Activated CD4-positive, alpha-beta T cell treated with anti-CD3 and anti-CD28 coated beads for 36 hours (primary cell): ENCODE measurements at regions of chr3 and their contacts with region 1.

Region 1: DNA sequence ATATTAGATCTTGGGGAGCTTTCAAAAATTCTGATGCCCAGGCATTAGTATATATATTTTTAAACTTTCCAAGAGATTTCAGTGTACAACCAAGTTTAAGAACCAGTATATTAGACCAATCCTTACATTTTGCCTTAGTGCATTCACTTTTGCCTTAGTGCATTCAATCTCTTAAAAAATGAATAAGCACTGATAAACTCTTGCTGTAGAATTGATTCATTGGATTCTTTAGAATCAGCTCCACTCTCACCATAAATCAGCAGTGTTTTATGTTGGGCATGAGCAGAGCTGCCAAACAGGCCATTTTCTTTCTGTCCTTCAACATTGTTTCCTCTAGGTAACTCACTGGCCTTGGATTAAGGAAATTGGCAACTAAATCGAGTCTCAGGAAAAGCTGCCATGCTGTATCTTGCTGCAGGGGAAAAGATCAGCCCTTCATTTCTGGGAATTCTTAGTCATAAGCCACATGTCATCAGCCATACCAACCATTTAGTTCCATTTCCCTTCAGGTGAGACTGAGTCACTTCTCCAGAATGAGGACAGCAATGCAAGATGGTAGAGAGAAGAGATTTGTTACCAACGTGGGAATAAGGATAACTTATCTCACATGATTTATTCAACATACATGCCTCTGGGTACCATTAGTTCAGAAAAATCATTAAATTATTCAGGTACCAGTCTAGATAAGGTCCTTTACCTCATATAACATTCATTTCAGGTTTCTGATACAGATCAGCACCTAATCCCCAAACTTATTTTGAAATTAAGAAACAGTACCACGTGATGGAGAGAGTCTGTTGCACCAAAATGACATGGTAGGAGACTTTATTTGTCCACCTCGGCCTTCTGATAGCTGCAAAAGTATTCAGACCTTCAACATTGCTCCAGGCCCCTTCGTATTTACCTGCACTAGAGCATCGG is 192.5 kb downstream of the P3H2 start:
- DNase-seq: no peak
- ATAC-seq: peak; percentile 91
- H3K4me3 Mint-ChIP-seq: no peak overlapping the region
- H3K27ac Mint-ChIP-seq: peak overlapping the region; percentile 79
- H3K4me1 Mint-ChIP-seq: peaks cover 26% of the 10 kb centered on the region
- H3K27me3 Mint-ChIP-seq: peaks cover 2% of the 10 kb centered on the region

Region 2: GRCh38 chr3:189570916-189571315 is 357.3 kb before region 1 on chr3:
- CTCF ChIA-PET with region 1: no interaction called
- POLR2A ChIA-PET with region 1: no interaction called
- intact Hi-C with region 1: no loop called
- DNase-seq: no peak
- ATAC-seq: peak; percentile 64
- H3K4me3 Mint-ChIP-seq: no peak overlapping the region
- H3K27ac Mint-ChIP-seq: no peak overlapping the region
- H3K4me1 Mint-ChIP-seq: peaks cover 35% of the 10 kb centered on the region
- H3K27me3 Mint-ChIP-seq: peaks cover 1% of the 10 kb centered on the region

Region 3: GRCh38 chr3:189941679-189942078 is 13.4 kb after region 1 on chr3:
- CTCF ChIA-PET with region 1: interaction called, 3 read pairs
- POLR2A ChIA-PET with region 1: no interaction called
- intact Hi-C with region 1: loop called in 1 of 2 experiments (anchors 2 kb)
- DNase-seq: peak; percentile 30
- ATAC-seq: no peak
- H3K4me3 Mint-ChIP-seq: no peak overlapping the region
- H3K27ac Mint-ChIP-seq: no peak overlapping the region
- H3K4me1 Mint-ChIP-seq: peaks cover 13% of the 10 kb centered on the region
- H3K27me3 Mint-ChIP-seq: no peaks in the 10 kb centered on the region

Region 4: DNA sequence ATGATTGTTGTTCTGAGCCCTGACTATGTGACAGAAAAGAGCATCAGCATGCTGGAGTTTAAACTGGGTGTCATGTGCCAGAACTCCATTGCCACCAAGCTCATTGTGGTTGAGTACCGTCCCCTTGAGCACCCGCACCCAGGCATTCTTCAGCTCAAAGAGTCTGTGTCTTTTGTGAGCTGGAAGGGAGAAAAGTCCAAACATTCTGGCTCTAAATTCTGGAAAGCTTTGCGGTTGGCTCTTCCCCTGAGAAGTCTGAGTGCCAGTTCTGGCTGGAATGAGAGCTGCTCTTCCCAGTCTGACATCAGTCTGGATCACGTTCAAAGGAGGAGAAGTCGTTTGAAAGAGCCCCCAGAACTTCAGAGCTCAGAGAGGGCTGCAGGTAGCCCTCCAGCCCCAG is 727.7 kb after region 1 on chr3:
- CTCF ChIA-PET with region 1: no interaction called
- POLR2A ChIA-PET with region 1: interaction called, 14 read pairs
- intact Hi-C with region 1: no loop called
- DNase-seq: no peak
- ATAC-seq: no peak
- H3K4me3 Mint-ChIP-seq: no peak overlapping the region
- H3K27ac Mint-ChIP-seq: no peak overlapping the region
- H3K4me1 Mint-ChIP-seq: no peaks in the 10 kb centered on the region
- H3K27me3 Mint-ChIP-seq: peaks cover 20% of the 10 kb centered on the region